IMR-90 (cell line): ENCODE measurements at regions of chr9 and their contacts with region 1.

Region 1: DNA sequence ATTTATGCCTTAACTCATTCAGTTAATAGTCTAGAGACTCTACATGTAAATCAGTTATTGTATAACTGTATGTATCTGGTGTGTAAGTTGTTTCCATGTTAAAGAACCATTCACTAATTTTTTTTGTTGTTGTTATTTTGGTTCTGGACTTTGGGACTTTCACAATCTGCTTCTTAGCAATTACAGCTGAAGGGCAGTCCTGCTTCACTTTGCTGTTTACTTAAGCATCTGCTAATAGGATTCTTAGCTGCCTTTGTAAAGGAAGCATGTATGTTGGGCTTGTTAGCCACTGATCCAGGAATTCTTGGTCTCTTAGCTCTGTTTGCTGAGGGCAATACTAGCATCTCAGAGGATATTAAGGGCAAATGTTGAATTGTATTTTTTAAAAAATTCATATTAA is 97.0 kb downstream of the FOCAD start:
- DNase-seq: peak; percentile 11
- ATAC-seq: no peak; the same call in 1 of the 2 replicates
- H3K4me3 ChIP-seq: no peak overlapping the region
- H3K27ac ChIP-seq: no peak overlapping the region
- H3K4me1 ChIP-seq: no peaks in the 10 kb centered on the region
- H3K27me3 ChIP-seq: no peaks in the 10 kb centered on the region
- CTCF ChIP-seq: no peak
- POLR2A ChIP-seq: no peak
- RAD21 ChIP-seq: no peak

Region 2: DNA sequence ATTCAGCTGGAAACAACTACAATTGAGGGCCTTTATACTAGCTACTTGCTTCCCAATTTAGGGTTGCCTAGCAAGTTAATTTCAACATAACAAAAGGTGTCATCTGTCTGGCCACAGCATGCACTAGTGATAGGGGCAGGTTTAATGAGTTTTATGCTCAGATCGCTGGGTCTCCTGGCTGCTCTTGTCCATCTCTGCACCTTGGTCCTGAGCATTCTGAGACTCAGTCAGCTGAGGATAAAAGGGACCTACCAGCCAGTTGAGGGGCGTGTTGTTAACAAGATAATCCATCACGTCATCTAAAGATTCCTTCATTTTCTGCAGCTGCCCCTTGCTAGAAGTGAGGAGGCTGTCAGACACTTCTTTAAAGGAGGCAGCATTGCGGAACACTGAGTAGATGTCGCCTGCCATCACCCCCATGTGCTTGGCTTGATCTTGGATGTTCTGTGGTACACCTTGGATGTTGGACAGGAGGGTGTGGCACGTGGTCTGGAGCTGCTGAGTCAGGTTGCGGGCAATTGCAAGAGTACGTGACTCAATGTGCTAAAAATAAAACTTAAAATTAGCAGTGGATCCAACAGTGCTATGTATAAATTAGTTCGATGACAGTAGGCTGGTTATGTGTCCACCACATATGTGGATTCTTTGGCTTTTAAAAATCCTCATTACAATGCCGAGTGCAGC is 1664.8 kb before region 1 on chr9:
- CTCF ChIA-PET with region 1: no interaction called
- POLR2A ChIA-PET with region 1: interaction called, 10 read pairs
- dilution Hi-C with region 1: no loop called
- in situ Hi-C with region 1: no loop called
- intact Hi-C with region 1: no loop called
- DNase-seq: peak; percentile 64
- ATAC-seq: no peak
- H3K4me3 ChIP-seq: no peak overlapping the region
- H3K27ac ChIP-seq: no peak overlapping the region
- H3K4me1 ChIP-seq: peaks cover 8% of the 10 kb centered on the region; the same call in 1 of the 2 replicates
- H3K27me3 ChIP-seq: no peaks in the 10 kb centered on the region
- CTCF ChIP-seq: no peak
- POLR2A ChIP-seq: no peak
- RAD21 ChIP-seq: no peak

Region 3: GRCh38 chr9:20197976-20198685 is 583.0 kb before region 1 on chr9:
- CTCF ChIA-PET with region 1: no interaction called
- POLR2A ChIA-PET with region 1: no interaction called
- dilution Hi-C with region 1: no loop called
- in situ Hi-C with region 1: no loop called
- intact Hi-C with region 1: no loop called
- DNase-seq: no peak
- ATAC-seq: no peak
- H3K4me3 ChIP-seq: no peak overlapping the region
- H3K27ac ChIP-seq: no peak overlapping the region
- H3K4me1 ChIP-seq: no peaks in the 10 kb centered on the region
- H3K27me3 ChIP-seq: peaks cover 13% of the 10 kb centered on the region
- CTCF ChIP-seq: no peak
- POLR2A ChIP-seq: no peak
- RAD21 ChIP-seq: no peak